Lower leg skin (tissue), 4 donors: ENCODE measurements at regions of chr17 and their contacts with region 1.

Region 1: DNA sequence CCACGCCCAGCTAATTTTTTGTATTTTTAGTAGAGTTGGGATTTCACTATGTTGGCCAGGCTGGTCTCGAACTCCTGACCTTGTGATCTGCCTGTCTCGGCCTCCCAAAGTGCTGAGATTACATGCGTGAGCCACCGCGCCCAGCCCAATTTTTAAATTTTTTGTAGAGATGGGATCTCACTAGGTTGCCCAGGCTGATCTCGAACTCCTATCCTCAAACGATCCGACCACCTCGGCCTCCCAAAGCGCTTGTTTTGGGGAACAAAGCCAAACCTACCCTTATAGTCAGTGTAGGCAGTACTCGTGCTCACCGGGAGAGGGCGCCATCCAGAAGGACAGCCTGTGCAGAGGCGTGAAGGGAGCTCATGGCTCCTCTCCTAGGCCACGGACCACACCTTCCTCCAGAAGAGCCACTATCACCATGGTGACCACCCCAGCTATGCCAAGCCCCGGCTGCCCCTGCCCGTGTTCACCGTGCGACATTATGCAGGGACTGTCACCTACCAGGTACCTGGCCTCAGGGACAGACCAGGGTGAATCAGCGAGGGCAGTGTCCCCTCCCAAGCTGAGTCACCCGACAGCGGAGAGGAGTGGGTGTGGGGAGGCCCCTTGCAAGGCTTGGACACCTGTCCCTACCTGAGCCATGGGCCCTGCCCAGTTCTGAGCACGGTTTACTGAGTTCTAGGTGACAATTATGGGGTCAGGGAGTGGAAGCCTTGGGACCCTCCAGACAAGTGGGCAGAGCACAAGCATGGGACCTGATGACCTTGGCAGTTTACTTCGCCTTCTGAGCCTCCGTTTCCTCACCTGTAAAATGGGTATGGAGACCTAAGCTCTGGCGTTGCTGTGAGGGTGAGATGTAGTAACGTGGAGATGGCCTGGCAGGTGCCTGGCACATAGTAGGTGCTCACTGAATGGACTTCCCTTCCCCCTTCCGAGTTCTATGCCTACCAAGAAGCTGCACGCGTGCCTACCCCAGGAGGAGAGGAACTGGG is 13.8 kb downstream of the MYO15B start:
- DNase-seq: peak in 1 of 2 donors; percentile 36
- H3K4me3 ChIP-seq: no peak overlapping the region
- CTCF ChIP-seq: peak in 1 of 3 donors; percentile 25
- POLR2A ChIP-seq: no peak

Region 2: GRCh38 chr17:75652915-75653549 is 51.7 kb after region 1 on chr17:
- intact Hi-C with region 1: loop called (anchors 5 kb)
- DNase-seq: no peak
- H3K4me3 ChIP-seq: no peak overlapping the region
- CTCF ChIP-seq: no peak
- POLR2A ChIP-seq: no peak